Breast epithelium (tissue), 4 donors: ENCODE measurements at regions of chr1 and their contacts with region 1.

Region 1: GRCh38 chr1:80529546-80529945 is 1271.2 kb upstream of the ADGRL2 start:
- DNase-seq: no peak
- H3K4me3 ChIP-seq: no peak overlapping the region
- H3K27ac ChIP-seq: no peak overlapping the region
- H3K4me1 ChIP-seq: peaks cover 0 to 4% of the 10 kb centered on the region in 2 donors
- H3K27me3 ChIP-seq: no peaks in the 10 kb centered on the region
- CTCF ChIP-seq: no peak
- POLR2A ChIP-seq: no peak

Region 2: DNA sequence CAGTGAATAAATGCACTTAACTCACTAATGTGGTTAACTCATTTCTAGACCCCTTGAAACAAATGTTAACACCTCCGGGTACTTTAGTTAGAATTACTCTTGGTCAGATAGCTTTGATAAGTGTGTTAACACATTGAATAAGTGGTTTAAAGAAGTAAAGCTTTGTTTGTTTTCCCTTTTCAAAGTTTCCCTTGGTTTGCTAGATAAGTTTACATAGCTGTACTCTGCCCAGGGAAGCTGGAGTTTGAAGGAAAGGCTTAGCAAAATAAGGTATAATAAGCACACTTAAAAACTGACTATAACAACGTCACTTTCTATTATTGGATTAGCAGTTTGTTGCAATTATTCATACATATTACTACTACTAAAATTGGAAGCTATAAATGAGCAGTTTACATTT is 37.3 kb after region 1 on chr1:
- intact Hi-C with region 1: loop called (anchors 2 kb)
- DNase-seq: no peak
- H3K4me3 ChIP-seq: no peak overlapping the region
- H3K27ac ChIP-seq: no peak overlapping the region
- H3K4me1 ChIP-seq: no peaks in the 10 kb centered on the region
- H3K27me3 ChIP-seq: no peaks in the 10 kb centered on the region
- CTCF ChIP-seq: no peak
- POLR2A ChIP-seq: no peak